Naive thymus-derived CD8-positive, alpha-beta T cell (primary cell): ENCODE measurements at regions of chr19 and their contacts with region 1.

Region 1: DNA sequence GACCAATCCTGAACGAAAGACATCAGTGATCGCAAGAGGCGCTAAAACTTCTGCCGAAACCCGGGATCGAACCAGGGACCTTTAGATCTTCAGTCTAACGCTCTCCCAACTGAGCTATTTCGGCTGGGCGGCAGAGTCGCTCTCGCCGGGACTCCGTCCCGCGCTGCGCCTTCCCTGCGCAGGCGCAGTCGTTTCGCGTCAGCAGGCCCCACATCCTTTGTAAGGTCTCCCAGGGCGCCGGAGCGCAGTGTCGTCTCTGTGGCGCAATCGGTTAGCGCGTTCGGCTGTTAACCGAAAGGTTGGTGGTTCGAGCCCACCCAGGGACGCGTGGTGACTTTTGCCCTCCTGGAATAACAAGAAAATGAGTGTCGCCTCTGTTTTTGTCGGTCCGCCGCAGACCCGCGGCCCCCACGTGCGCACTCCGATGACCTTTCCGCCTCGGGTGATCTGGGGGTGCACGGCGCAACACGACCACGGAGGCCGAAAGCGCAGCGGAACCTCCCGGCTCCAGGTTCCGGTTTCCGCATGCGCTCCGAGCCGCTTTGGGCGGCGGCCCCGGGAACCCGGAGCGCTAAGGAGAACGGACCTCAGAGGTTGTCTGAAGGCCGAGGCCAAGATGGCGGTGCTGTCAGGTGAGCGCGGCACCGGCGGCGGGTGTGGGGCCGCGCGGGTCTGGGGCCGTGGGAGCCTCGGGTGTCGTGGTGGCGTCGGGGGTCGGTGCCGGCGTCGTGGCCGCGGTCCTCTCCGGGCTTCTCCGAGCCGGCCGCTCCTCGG is at the start of gene NDUFS7:
- DNase-seq: peak; percentile 87 to 100 (median 94)
- ATAC-seq: peak; percentile 87 to 89
- H3K4me3 Mint-ChIP-seq: peak within 1 kb of the TSS; percentile 85 to 98 (median 94)
- H3K27ac Mint-ChIP-seq: peak within 1 kb of the TSS; percentile 94 to 100 (median 97)
- H3K4me1 Mint-ChIP-seq: peaks cover 19 to 32% (median 26%) of the 10 kb centered on the region in 4 donors
- H3K27me3 Mint-ChIP-seq: peaks cover 0 to 5% (median 2%) of the 10 kb centered on the region in 5 donors
- polyA plus RNA-seq, gene NDUFS7: 211 to 233 (median 215) TPM

Region 2: DNA sequence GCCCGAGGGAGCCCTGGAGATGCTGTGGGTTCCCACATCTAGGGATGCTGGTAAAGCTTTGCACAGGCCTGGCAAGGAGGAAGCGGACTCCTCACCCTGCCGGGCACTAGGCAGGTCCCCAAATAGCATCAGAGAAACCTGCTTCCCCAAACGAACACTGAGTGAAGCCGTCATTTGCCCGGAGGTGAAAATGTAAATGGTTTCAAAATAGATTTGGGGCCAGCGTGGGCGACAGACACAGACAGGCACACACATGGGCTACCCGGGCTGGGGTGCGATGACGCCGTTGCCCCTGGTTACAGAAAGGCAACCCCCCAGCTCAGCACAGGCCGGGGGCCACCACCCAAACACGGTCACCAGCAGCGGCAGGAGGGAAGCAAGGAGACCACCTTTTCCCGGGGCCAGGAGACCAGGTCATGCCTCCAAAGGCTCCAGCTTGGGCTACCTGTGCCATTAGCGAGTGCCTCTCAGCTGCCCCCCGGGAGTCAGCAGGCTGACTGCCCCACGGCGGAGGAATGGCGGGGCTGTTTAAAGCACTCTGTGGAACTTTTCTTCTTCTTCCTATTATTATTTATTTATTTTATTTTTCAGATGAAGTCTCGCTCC is 47.3 kb before region 1 on chr19:
- POLR2A ChIA-PET with region 1: no interaction called
- DNase-seq: no peak
- ATAC-seq: no peak
- H3K4me3 Mint-ChIP-seq: no peak overlapping the region
- H3K27ac Mint-ChIP-seq: no peak overlapping the region
- H3K4me1 Mint-ChIP-seq: no peaks in the 10 kb centered on the region
- H3K27me3 Mint-ChIP-seq: peaks cover 0 to 6% (median 2%) of the 10 kb centered on the region in 5 donors

Region 3: DNA sequence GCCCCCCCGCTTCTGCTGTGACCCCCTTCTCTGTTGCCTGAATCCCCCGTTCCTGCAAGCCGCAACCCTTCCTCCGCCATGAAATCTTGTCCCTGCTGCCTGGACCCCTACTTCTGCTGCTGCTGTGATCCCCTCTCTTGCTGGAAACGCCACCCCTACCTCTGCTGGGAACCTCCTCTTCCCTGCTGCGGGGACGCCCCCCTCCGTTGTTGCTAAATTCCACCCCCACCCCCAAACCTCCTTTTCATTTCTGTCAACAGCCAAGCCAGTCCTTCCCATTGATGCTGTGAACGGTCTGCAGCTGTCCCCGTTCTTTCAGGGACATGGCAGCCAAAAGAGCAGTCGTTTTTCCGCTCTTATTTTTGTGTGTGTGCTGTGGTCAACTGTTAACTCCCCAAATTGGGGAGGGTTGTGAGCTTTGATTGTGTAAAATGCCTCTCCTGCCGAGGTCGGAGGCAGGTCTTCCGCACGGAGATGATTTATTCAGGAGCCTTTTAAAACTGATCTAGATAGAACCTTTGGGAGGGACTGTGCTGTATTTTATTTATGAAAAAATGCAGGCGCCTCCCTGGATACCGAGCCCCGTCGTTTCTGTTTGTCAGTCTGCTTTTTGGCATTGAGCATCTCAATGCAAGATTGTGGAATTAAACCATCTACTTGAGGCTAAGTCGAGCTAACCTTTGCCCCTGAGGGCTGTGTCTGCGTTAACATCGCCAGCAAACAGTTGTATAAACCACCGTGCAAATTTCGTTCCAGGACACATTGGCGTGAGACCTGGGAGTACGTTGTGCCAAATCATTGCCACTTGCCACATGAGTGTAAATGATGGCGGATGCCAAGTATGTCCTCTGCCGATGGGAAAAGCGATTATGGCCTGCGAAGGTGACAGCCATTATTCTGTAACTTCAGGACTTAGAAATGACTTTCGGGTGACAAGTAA is 27.7 kb before region 1 on chr19:
- POLR2A ChIA-PET with region 1: interaction called, 11 read pairs
- DNase-seq: no peak
- ATAC-seq: no peak
- H3K4me3 Mint-ChIP-seq: peak overlapping the region; percentile 72 to 96 (median 87)
- H3K27ac Mint-ChIP-seq: peak overlapping the region; percentile 12 to 90 (median 78)
- H3K4me1 Mint-ChIP-seq: peaks cover 11 to 25% (median 16%) of the 10 kb centered on the region in 4 donors
- H3K27me3 Mint-ChIP-seq: no peaks in the 10 kb centered on the region

Region 4: DNA sequence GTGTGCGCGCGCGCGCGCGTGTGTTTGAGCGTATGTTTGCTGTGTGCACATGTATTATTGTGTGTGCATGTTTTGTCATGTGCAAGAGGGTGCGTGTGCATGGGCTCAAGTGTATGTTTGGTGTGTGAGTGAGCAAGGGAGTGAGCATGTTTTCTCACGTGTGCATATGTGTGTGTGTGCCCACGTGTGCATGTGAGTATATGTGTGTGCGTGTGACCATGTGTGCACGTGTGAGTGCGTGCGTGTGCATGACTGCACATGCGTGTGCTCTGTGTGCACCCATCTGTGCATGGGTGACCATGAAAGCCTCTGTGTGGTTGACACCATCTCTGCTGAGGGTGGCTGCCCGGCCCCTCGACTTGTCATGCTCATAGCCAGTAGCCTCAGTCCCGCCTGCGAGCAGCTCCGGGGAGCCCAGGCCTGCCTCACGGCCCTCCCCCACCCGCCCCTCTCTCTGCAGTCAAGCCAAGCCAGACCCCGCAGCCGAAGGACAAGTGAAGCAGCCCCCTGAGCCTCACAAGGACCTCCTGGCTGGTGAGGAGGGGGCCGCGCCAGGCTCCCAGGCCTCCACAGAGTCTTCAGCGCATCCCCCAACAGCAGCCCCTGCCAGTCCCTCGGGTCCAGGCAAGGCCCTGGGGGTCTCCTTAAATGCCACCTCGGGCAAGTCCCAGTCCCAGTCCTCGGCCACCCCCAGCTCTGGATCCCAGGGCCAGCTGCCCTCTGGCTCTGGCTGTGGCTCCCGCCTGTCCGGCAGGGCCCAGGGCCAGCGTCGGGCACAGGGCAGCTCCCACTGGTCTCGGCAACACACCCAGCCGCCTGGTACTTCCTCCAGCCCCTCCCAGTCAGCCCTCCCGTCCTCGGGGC is 113.4 kb after region 1 on chr19:
- POLR2A ChIA-PET with region 1: no interaction called
- DNase-seq: peak in 1 of 10 donors; percentile 45
- ATAC-seq: no peak
- H3K4me3 Mint-ChIP-seq: no peak overlapping the region
- H3K27ac Mint-ChIP-seq: no peak overlapping the region
- H3K4me1 Mint-ChIP-seq: peaks cover 0 to 3% (median 2%) of the 10 kb centered on the region in 4 donors
- H3K27me3 Mint-ChIP-seq: peaks cover 0 to 2% (median 0%) of the 10 kb centered on the region in 5 donors